MCF 10A (cell line): ENCODE measurements at regions of chr12 and their contacts with region 1.

Region 1: GRCh38 chr12:98490501-98491453 is 24.6 kb upstream of the TMPO start:
- DNase-seq: peak; percentile 86
- H3K4me3 Mint-ChIP-seq: peak overlapping the region; percentile 57
- H3K27ac Mint-ChIP-seq: peak overlapping the region; percentile 54
- H3K4me1 Mint-ChIP-seq: no peaks in the 10 kb centered on the region
- H3K27me3 Mint-ChIP-seq: no peaks in the 10 kb centered on the region
- CTCF ChIP-seq: peak; percentile 81

Region 2: GRCh38 chr12:97148941-97149559 is 1341.7 kb before region 1 on chr12:
- CTCF ChIA-PET with region 1: no interaction called
- POLR2A ChIA-PET with region 1: no interaction called
- intact Hi-C with region 1: no loop called
- DNase-seq: peak; percentile 53
- H3K4me3 Mint-ChIP-seq: no peak overlapping the region
- H3K27ac Mint-ChIP-seq: no peak overlapping the region
- H3K4me1 Mint-ChIP-seq: no peaks in the 10 kb centered on the region
- H3K27me3 Mint-ChIP-seq: peaks cover 21% of the 10 kb centered on the region
- CTCF ChIP-seq: peak; percentile 64

Region 3: DNA sequence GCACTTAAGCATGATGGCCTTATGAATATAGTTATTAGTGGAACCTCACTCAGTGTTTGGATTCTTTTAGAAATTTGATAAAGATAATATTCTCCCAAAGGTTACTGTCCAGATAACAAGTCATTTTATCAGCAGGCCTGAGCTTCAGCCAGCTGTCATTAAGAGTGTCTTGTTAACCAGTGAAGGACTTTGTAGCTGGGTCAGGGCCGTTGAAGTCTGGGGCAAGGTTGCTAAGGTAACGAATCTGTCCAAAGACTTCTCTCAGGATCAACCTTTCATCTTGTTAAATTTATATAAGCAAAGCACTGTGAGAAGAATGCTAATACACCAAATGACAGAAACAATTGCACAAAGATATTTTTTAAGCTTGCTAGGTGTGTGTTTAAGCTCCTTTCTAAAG is 246.6 kb before region 1 on chr12:
- CTCF ChIA-PET with region 1: no interaction called
- POLR2A ChIA-PET with region 1: no interaction called
- intact Hi-C with region 1: no loop called
- DNase-seq: no peak
- H3K4me3 Mint-ChIP-seq: no peak overlapping the region
- H3K27ac Mint-ChIP-seq: no peak overlapping the region
- H3K4me1 Mint-ChIP-seq: no peaks in the 10 kb centered on the region
- H3K27me3 Mint-ChIP-seq: peaks cover 20% of the 10 kb centered on the region
- CTCF ChIP-seq: no peak

Region 4: DNA sequence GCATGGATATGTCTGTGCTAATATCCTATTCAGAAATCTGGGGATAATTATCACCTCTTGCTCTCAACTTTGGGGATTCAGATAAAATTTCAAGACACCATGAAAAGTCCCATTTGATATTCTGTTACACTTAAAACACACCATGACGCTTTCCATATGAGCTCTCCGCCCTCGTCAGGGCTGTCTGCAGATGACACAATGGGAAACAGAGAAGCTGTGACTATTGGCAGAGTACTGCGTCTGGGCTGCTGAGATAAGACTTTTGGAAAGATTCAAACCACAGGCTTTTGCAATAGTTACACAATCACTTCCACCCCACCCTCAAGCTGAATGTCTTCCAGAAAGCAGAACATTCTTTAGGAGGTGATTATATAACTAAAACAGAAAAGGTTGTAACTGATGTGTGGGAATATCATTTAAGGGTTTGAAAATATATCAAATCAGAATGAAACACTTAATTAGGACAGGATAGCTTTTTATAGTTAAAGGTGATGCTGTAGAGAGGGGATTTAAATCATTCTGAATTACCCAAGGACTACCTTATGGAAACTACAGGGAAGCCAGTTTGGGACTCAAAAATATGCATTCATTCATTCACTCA is 50.7 kb before region 1 on chr12:
- CTCF ChIA-PET with region 1: interaction called, 12 read pairs
- POLR2A ChIA-PET with region 1: interaction called, 12 read pairs
- intact Hi-C with region 1: no loop called
- DNase-seq: peak; percentile 96
- H3K4me3 Mint-ChIP-seq: peak overlapping the region; percentile 39
- H3K27ac Mint-ChIP-seq: peak overlapping the region; percentile 19
- H3K4me1 Mint-ChIP-seq: peaks cover 10% of the 10 kb centered on the region
- H3K27me3 Mint-ChIP-seq: no peaks in the 10 kb centered on the region
- CTCF ChIP-seq: no peak

Region 5: DNA sequence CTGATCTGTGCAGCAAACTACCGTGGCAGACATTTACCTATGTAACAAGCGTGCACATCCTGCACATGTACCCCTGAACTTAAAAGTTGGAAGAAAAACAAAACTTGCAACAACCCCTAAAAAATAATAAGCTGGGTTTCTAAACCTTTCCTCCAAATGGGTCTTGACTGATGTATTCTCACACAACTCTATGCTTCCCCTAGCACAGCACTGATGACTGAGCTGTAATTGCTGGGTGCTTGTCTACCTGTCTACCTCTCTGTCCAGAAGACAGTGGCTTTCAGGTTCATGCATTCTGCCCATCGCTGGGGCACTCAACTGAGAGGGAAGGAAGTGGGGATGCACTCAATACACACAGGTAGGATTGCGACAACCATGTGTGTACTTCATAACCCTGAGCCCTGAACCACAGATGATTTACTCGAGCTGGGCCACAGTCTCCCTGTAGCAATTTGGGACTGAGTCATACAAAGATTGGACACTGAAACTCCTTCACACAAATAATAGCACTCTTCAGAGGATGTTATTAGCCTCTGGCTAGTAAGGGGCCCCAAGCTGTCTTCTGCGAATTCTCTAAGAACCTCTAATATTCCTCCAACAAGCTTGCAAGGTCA is 20.2 kb before region 1 on chr12:
- CTCF ChIA-PET with region 1: interaction called, 31 read pairs
- POLR2A ChIA-PET with region 1: interaction called, 8 read pairs
- intact Hi-C with region 1: no loop called
- DNase-seq: peak; percentile 71
- H3K4me3 Mint-ChIP-seq: no peak overlapping the region
- H3K27ac Mint-ChIP-seq: peak overlapping the region; percentile 26
- H3K4me1 Mint-ChIP-seq: peaks cover 31% of the 10 kb centered on the region
- H3K27me3 Mint-ChIP-seq: no peaks in the 10 kb centered on the region
- CTCF ChIP-seq: no peak

Region 6: DNA sequence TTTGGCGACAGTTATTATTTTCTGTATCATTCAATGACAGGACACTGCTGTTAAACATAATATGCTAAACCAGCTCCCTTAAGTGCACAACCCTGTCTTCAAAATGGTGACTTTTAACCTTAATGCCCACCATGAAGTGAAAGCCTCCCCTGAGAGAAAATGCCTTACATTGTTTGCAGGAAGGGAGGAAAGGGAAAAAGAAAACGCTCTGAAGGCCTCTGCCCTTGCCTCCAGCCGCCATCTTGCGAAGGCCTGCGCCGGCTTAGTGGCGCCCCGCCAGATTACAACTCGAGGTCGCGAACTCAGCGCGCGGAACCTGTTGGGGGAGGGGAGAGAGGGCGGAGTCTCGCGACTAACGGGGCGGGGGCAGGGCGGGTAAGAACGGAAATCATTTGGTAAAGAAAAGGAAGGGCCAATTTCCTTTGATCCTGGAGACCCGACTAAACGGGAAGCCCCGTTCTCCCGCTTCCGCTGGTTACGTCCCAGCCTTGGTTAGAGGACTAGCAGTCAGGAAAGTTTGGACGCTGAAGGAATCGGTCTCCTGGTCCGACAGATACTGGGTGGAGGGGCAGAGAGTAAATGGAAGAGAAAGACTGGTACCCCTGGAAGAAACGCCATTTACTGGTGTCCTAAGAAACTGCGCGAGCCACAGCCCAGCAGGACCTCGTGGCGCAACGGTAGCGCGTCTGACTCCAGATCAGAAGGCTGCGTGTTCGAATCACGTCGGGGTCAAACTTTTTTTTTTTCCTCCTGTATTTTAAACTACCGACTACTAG is 13.0 kb after region 1 on chr12:
- CTCF ChIA-PET with region 1: interaction called, 25 read pairs
- POLR2A ChIA-PET with region 1: interaction called, 17 read pairs
- intact Hi-C with region 1: loop called (anchors 1 kb)
- DNase-seq: peak; percentile 92
- H3K4me3 Mint-ChIP-seq: peak overlapping the region; percentile 94
- H3K27ac Mint-ChIP-seq: peak overlapping the region; percentile 98
- H3K4me1 Mint-ChIP-seq: no peaks in the 10 kb centered on the region
- H3K27me3 Mint-ChIP-seq: no peaks in the 10 kb centered on the region
- CTCF ChIP-seq: no peak

Region 7: DNA sequence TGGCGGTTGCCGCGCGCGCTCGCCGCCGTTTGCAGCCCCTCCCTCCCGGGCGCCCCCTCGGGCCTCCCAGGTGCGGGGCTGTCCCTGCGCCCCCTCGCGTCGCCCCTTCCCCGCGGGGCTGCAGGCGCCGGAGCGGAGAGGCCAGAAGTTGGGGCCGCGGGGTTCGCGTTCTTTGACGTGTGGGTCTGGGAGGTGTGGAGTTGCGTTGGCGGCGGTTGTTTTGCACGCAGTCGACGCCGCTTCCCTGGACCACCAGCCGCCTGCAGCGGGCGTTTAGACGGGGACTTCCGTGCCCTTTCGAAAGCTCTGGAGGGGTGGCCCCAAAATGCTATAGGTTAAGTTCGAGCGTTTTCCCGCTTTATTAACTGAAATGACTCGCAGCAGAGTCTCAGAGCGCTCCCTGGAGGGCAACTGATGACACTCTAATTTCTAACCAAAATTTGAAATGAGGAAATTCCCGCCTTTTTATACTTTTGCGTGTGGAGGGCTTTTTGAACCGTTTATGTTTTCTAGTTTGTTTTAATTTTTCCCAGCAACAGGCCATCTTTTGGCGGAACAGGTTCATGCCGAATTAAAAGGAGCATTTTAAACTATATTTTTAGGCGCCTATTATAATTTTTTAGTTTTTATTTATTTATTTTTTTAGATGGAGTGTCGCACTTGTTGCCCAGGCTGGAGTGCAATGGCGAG is 25.6 kb after region 1 on chr12:
- CTCF ChIA-PET with region 1: interaction called, 49 read pairs
- POLR2A ChIA-PET with region 1: interaction called, 61 read pairs
- intact Hi-C with region 1: loop called (anchors 1 kb)
- DNase-seq: peak; percentile 93
- H3K4me3 Mint-ChIP-seq: peak overlapping the region; percentile 96
- H3K27ac Mint-ChIP-seq: peak overlapping the region; percentile 61
- H3K4me1 Mint-ChIP-seq: peaks cover 20% of the 10 kb centered on the region
- H3K27me3 Mint-ChIP-seq: no peaks in the 10 kb centered on the region
- CTCF ChIP-seq: peak; percentile 78